A549 (cell line): ENCODE measurements at regions of chr11 and their contacts with region 1.

Region 1: GRCh38 chr11:117107701-117108590 is 9.7 kb upstream of the SIK3 start:
- DNase-seq: no peak
- ATAC-seq: no peak
- H3K4me3 ChIP-seq: no peak overlapping the region
- H3K27ac ChIP-seq: no peak overlapping the region
- H3K4me1 ChIP-seq: no peaks in the 10 kb centered on the region
- CTCF ChIP-seq: no peak
- EP300 ChIP-seq: no peak
- POLR2A ChIP-seq: no peak
- RAD21 ChIP-seq: no peak

Region 2: DNA sequence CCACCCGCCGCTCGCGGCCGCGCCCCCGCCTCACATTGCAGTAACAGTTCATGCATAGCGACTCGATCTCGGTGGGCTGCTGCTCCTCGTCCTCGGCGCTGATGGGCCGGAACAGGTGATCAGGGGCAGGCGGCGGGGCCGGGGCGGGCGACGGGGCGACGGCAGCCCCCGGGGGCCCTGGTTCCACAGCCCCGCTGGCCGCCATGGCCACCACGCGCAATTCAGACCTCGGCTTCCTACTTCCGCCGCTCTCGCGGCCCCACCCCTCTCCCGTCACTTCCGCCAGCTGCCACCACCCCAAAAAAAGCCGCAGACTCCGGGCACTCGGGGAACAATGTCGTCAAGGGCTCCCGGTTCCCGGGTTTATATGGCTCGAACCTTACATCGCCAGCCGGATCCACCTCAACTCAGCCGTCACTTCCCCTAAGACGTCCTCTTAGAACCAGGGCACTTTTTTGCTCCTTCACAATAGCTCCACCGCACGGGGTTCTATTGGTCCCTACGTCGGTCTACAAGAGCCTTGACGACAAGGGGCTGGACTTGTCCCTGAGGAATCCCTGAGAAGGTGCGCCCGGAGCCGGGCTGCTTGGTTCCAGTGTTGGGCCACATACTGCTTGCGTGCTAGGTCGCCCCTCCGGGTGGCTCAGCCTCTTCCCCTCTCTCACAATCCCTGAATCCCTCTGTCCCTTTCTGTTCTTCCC is 320.0 kb before region 1 on chr11 and contains the start of gene ZPR1:
- CTCF ChIA-PET with region 1: interaction called, 114 read pairs
- POLR2A ChIA-PET with region 1: no interaction called
- DNase-seq: peak; percentile 58 to 82
- ATAC-seq: peak; percentile 85 to 89
- H3K4me3 ChIP-seq: peak within 1 kb of the TSS; percentile 94
- H3K27ac ChIP-seq: peak within 1 kb of the TSS; percentile 94 to 97
- H3K4me1 ChIP-seq: peaks cover 10% of the 10 kb centered on the region; the same call in 1 of the 3 replicates
- CTCF ChIP-seq: no peak
- EP300 ChIP-seq: no peak
- POLR2A ChIP-seq: peak; percentile 76
- RAD21 ChIP-seq: no peak
- polyA plus RNA-seq, gene ZPR1: 65.6 and 77.5 TPM in 2 replicates

Region 3: GRCh38 chr11:116851626-116852025 is 256.3 kb before region 1 on chr11:
- CTCF ChIA-PET with region 1: interaction called, 10 read pairs
- POLR2A ChIA-PET with region 1: no interaction called
- DNase-seq: no peak
- ATAC-seq: no peak
- H3K4me3 ChIP-seq: no peak overlapping the region
- H3K27ac ChIP-seq: no peak overlapping the region
- H3K4me1 ChIP-seq: 0 out of 3 replicates have a peak, but pooled peaks cover 5% of the 10 kb centered on the region
- CTCF ChIP-seq: no peak
- EP300 ChIP-seq: no peak
- POLR2A ChIP-seq: no peak
- RAD21 ChIP-seq: no peak

Region 4: DNA sequence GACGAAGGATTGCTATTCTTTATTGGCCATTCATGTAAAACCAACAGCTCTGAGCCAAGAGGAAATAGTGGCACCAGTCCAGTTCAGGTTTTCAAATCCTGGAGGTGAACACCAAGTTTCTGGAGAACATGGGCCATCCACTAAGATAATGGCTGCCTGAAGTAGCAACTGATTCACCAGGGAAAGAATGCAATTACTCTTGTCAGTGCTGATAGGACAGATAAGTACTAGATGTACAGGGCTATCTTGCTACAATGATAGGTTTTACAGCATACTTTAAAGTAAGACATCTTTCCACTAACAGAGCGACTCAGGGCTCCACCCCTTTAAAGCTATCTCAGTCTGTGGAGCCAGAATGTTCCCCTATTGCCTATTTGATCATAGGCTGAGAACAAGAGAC is 233.7 kb before region 1 on chr11:
- CTCF ChIA-PET with region 1: interaction called, 77 read pairs
- POLR2A ChIA-PET with region 1: no interaction called
- DNase-seq: no peak
- ATAC-seq: no peak
- H3K4me3 ChIP-seq: no peak overlapping the region
- H3K27ac ChIP-seq: no peak overlapping the region
- H3K4me1 ChIP-seq: no peaks in the 10 kb centered on the region
- CTCF ChIP-seq: no peak
- EP300 ChIP-seq: no peak
- POLR2A ChIP-seq: no peak
- RAD21 ChIP-seq: no peak

Region 5: GRCh38 chr11:116890193-116890592 is 217.8 kb before region 1 on chr11:
- CTCF ChIA-PET with region 1: interaction called, 43 read pairs
- POLR2A ChIA-PET with region 1: no interaction called
- DNase-seq: no peak
- ATAC-seq: no peak
- H3K4me3 ChIP-seq: no peak overlapping the region
- H3K27ac ChIP-seq: no peak overlapping the region
- H3K4me1 ChIP-seq: no peaks in the 10 kb centered on the region
- CTCF ChIP-seq: no peak
- EP300 ChIP-seq: no peak
- POLR2A ChIP-seq: no peak
- RAD21 ChIP-seq: no peak

Region 6: GRCh38 chr11:117134431-117134830 is 26.5 kb after region 1 on chr11:
- CTCF ChIA-PET with region 1: interaction called, 10 read pairs
- POLR2A ChIA-PET with region 1: no interaction called
- DNase-seq: no peak
- ATAC-seq: no peak
- H3K4me3 ChIP-seq: no peak overlapping the region
- H3K27ac ChIP-seq: no peak overlapping the region
- H3K4me1 ChIP-seq: peaks cover 20% of the 10 kb centered on the region
- CTCF ChIP-seq: no peak
- EP300 ChIP-seq: no peak
- POLR2A ChIP-seq: no peak
- RAD21 ChIP-seq: no peak

Region 7: GRCh38 chr11:117997823-117998579 is 890.1 kb after region 1 on chr11:
- CTCF ChIA-PET with region 1: no interaction called
- POLR2A ChIA-PET with region 1: no interaction called
- DNase-seq: no peak
- ATAC-seq: no peak
- H3K4me3 ChIP-seq: no peak overlapping the region
- H3K27ac ChIP-seq: no peak overlapping the region
- H3K4me1 ChIP-seq: no peaks in the 10 kb centered on the region
- CTCF ChIP-seq: no peak
- EP300 ChIP-seq: no peak
- POLR2A ChIP-seq: no peak
- RAD21 ChIP-seq: no peak